ENCODE measurements at regions of chr19 and their contacts with region 1.

Region 1: DNA sequence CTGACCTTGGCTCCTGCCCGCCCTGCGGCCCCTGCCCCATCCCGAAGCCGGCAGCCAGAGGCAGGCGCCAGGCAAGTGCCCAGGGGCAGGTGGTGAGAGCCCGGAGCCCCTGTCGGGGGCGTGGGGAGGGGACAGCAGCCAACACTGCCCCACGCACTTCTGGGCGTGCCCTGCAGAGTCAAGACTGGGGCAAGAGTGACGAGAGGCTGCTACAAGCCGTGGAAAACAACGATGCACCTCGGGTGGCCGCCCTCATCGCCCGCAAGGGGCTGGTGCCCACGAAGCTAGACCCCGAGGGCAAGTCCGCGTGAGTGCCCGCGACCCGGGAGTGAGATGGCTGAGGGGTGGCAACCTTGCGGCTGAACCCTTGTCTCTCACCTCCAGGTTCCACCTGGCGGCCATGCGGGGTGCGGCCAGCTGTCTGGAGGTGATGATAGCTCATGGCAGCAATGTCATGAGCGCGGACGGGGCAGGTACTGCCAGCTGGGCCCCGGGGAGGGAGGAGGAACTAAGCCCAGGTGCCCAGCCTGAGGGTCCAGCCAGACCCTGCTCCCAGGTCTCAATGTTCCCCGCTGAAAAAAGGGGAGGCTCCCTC is 17.3 kb downstream of the ANKRD24 start:
- DNase-seq: no peak
- CTCF ChIP-seq: no peak

Region 2: DNA sequence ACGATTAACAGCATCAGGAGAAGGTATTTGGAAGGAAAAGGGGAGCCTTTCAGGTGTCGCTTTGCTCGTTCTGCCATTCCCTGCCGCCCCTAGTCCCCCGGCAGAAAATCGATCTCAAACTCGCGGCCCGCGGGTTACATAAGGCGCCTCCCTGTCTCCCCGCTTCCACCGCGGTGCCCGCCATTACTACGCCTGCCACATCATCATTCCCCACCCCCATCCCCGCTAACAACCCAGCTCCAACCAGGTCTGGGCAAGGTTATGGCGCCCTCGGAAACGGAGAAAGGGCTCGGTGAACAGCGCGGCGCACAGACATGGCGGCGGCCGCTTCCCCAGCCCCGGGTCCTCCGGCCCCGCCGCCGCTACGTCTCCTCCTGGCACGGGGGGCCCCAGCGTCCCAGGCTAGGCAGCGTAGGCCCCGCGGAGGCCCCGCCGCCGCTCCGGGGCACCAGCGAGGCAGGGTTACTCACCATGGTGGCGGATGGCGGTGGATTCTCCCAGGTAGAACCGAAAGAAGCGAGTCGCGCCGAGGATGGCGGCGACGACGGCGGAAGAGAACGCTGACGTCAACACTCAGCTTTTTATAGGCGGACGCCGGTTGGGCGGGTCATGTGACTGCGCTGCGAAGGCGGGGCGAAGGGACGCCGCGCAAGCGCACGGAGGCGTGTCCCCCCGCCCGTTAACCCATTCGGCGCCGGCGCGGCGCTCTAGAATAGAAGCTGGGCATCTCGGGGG is 214.7 kb before region 1 on chr19 and contains the start of gene EEF2:
- CTCF ChIA-PET with region 1: interaction called, 13 read pairs
- POLR2A ChIA-PET with region 1: interaction called, 4 read pairs
- DNase-seq: peak; percentile 93
- CTCF ChIP-seq: no peak

Region 3: GRCh38 chr19:4052050-4052999 is 147.5 kb before region 1 on chr19:
- CTCF ChIA-PET with region 1: no interaction called
- POLR2A ChIA-PET with region 1: no interaction called
- DNase-seq: no peak
- CTCF ChIP-seq: no peak

Region 4: DNA sequence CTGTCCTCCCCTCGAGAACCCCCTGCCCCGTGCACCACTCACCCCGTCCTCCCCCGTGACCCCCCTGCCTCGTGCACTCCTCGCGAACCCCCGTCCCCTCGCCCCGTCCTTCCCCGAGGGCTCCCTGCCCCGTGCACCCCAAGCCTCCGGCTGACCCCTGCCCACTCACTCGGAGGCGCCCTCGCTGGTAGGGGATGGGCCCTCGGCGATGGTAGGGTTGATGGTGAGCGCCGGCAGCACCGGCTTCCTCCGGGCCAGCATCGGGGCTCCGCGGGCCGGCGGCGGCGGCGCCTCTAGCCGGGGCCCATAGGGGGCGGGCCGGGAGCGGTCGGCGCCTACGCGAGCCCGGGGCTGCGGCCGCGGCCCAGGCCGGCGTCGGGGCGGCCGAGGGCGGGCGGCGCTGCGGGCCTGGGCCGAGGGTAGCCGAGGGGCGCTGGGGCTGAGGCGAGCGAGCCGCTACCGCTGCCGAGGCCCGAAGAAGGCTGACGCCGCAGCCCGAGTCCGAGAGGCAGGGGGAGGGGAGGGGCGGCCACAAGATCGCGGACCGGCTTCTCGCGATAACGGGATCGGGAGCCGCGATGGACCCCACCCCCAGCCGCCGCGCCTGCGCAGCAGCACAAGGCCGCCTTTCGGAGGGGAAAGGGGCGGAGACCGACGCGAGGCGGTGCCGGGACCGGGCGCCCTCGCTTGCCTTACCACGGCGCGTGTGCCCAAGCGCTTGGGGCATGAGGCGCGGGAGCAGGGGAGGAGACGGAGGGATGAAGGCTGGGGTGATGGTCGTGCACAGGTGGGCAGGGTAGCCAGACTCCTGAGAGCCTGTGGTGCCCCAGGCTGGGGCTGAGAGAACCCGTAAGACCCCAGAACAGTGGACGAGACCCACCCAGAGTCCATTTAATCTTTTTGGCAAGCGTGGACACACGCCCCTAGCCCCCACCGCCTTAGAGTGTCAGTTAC is 75.9 kb before region 1 on chr19 and contains the start of gene MAP2K2:
- CTCF ChIA-PET with region 1: no interaction called
- POLR2A ChIA-PET with region 1: no interaction called
- DNase-seq: peak; percentile 98
- CTCF ChIP-seq: no peak

Region 5: DNA sequence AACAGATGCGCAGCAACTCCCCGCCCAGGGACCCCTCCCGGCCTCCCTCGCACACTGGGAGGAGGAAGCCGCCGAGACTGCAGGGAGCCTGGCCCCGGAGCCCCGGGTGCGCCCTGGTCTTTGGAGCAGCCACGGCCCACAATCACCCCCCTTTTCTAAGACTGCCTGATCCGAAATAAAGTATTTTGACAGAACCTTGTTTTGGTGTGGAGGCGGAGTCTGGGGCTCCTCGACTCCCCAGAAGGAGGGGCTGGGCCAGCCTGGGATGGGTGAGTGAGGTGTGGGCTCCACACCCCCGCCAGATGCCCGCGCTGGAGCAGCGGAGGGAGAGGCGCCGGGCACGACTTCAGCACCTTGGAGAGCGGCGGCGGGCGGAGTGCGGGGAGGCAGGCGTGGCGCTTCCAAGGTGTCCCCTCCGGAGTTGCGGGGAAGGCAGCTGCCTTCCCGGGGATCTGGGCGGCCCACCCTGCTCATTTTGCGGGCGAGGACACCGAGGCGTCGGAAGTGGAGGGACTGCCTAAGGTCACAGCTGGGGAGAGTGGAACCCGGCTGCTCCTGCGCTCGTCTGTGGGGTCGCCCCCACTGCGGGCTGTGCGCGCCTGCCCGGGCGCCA is 26.8 kb before region 1 on chr19:
- CTCF ChIA-PET with region 1: interaction called, 26 read pairs
- POLR2A ChIA-PET with region 1: no interaction called
- DNase-seq: peak; percentile 58
- CTCF ChIP-seq: no peak

Region 6: GRCh38 chr19:4186087-4186993 is 13.5 kb before region 1 on chr19:
- CTCF ChIA-PET with region 1: interaction called, 12 read pairs
- POLR2A ChIA-PET with region 1: no interaction called
- DNase-seq: peak; percentile 86
- CTCF ChIP-seq: peak; percentile 84

Region 7: GRCh38 chr19:4224470-4224869 is 24.7 kb after region 1 on chr19:
- CTCF ChIA-PET with region 1: interaction called, 15 read pairs
- POLR2A ChIA-PET with region 1: no interaction called
- DNase-seq: no peak
- CTCF ChIP-seq: no peak